Colonic mucosa (tissue), 4 donors: ENCODE measurements at regions of chr2 and their contacts with region 1.

Region 1: GRCh38 chr2:25664183-25664964 is 9.0 kb downstream of the DTNB start:
- DNase-seq: peak; percentile 64
- H3K4me3 ChIP-seq: no peak overlapping the region
- H3K27ac ChIP-seq: no peak overlapping the region
- H3K4me1 ChIP-seq: no peaks in the 10 kb centered on the region
- H3K27me3 ChIP-seq: no peaks in the 10 kb centered on the region
- CTCF ChIP-seq: peak; percentile 51

Region 2: GRCh38 chr2:25606892-25607291 is 57.5 kb before region 1 on chr2:
- intact Hi-C with region 1: loop called (anchors 2 kb)
- DNase-seq: no peak
- H3K4me3 ChIP-seq: no peak overlapping the region
- H3K27ac ChIP-seq: no peak overlapping the region
- H3K4me1 ChIP-seq: no peaks in the 10 kb centered on the region
- H3K27me3 ChIP-seq: no peaks in the 10 kb centered on the region
- CTCF ChIP-seq: peak; percentile 54